ENCODE measurements at regions of chr15 and their contacts with region 1.

Region 1: DNA sequence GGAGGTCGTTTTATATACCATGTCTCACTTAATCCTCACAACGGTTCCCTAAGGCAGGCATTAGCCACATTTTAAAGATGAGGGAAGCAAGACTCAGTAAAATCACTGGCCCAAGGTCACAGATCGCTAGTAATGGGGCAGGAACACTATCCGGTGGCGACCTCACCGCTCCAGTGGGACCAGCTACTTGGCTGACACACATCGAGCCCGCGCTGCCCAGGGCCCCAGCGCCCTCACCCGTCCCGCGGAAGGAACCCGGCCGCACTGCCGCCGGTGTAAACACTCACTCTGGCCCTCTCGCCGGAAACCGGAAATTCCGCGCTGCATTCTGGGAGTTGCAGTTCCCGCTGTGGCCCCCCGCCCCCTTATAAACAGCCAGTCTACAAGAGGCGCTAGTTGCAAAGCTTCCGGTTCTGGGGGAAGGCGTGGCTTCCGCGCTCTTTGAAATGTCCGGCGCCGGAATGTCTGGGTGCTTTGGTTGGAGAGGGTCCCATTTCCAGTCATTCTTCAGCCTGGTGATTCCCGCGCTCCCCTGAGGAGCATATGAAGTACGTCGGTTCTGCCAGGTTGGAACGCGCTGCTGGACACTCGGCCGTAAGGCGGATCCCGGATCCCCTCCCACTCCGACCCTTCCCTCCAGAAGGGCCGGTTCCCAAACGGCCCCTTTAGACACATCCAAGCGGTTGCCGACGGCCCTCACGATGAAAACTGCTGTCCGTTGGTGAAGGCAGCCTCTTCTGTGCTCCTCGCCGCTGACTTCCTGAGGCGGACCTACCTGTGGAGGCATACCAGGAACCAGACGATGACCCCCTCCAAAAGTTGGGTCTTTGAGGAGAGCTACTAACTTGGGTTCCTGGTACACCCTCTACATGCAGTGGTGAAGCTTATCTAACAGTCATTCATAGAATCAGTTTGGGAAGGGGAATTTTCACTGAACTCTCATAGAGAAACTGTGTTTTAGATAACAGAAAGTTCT is at the start of gene UBL7:
- DNase-seq: peak; percentile 93 to 96
- ATAC-seq: peak; percentile 98 to 99 (median 99)
- H3K4me3 ChIP-seq: peak within 1 kb of the TSS; percentile 90
- H3K4me3 Mint-ChIP-seq: peak within 1 kb of the TSS; percentile 86
- H3K27ac ChIP-seq: peak within 1 kb of the TSS; percentile 82
- H3K27ac Mint-ChIP-seq: peak within 1 kb of the TSS; percentile 87
- H3K4me1 ChIP-seq: peaks cover 14% of the 10 kb centered on the region
- H3K4me1 Mint-ChIP-seq: peaks cover 14 to 32% of the 10 kb centered on the region in 2 donors
- H3K27me3 ChIP-seq: no peaks in the 10 kb centered on the region
- H3K27me3 Mint-ChIP-seq: no peaks in the 10 kb centered on the region
- CTCF ChIP-seq: no peak
- total RNA-seq, gene UBL7: 25.1 to 38.7 (median 29.0) TPM

Region 2: GRCh38 chr15:74489518-74490338 is 28.6 kb after region 1 on chr15:
- intact Hi-C with region 1: loop called (anchors 2 kb)
- DNase-seq: peak; percentile 59 to 87
- ATAC-seq: peak; percentile 86 to 94 (median 93)
- H3K4me3 ChIP-seq: no peak overlapping the region
- H3K4me3 Mint-ChIP-seq: peak overlapping the region; percentile 43
- H3K27ac ChIP-seq: peak overlapping the region; percentile 22
- H3K27ac Mint-ChIP-seq: peak overlapping the region; percentile 41 to 78
- H3K4me1 ChIP-seq: peaks cover 20% of the 10 kb centered on the region
- H3K4me1 Mint-ChIP-seq: peaks cover 14% of the 10 kb centered on the region in 2 donors
- H3K27me3 ChIP-seq: no peaks in the 10 kb centered on the region
- H3K27me3 Mint-ChIP-seq: no peaks in the 10 kb centered on the region
- CTCF ChIP-seq: peak; percentile 76

Region 3: DNA sequence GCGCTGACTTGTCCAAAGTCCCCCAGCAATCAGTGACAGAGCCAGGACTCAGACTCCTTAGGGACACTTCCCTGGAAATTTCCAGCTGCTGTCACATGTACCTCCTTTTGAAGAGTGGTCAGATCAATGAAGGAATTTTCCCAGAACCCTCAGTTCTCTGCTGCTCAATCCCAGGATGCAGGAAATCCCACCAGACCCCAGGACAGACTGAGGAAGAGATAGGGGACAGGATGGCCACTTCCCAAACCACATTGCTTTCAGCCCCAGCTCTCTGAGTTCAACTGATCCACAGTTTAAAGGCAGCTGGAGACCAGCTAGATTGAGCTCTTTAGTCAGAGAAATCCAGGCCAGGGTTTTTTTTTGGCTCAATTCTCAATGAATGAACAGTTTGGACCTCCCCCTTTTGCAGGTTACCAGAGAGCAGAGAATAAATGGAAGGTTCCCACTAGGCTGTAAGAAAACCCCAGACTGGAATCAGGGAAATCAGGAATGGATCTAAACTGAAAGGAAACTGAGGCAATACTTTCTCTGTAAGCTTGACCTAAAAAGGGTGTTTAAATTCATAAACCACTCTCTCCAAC is 262.7 kb after region 1 on chr15:
- intact Hi-C with region 1: no loop called
- DNase-seq: peak in 1 of 2 donors; percentile 51
- ATAC-seq: peak in 2 of 3 donors; percentile 21 to 28
- H3K4me3 ChIP-seq: no peak overlapping the region
- H3K4me3 Mint-ChIP-seq: peak overlapping the region; percentile 67
- H3K27ac ChIP-seq: no peak overlapping the region
- H3K27ac Mint-ChIP-seq: no peak overlapping the region
- H3K4me1 ChIP-seq: peaks cover 18% of the 10 kb centered on the region
- H3K4me1 Mint-ChIP-seq: peaks cover 6 to 13% of the 10 kb centered on the region in 2 donors
- H3K27me3 ChIP-seq: peaks cover 7% of the 10 kb centered on the region
- H3K27me3 Mint-ChIP-seq: peaks cover 6 to 7% of the 10 kb centered on the region in 2 donors
- CTCF ChIP-seq: no peak

Measured in natural killer cell (primary cell).